Cardiac septum (tissue), 1 donor: ENCODE measurements at regions of chr1 and their contacts with region 1.

Region 1: GRCh38 chr1:17826165-17826488 is 71.0 kb downstream of the ACTL8 start:
- DNase-seq: peak; percentile 80

Region 2: DNA sequence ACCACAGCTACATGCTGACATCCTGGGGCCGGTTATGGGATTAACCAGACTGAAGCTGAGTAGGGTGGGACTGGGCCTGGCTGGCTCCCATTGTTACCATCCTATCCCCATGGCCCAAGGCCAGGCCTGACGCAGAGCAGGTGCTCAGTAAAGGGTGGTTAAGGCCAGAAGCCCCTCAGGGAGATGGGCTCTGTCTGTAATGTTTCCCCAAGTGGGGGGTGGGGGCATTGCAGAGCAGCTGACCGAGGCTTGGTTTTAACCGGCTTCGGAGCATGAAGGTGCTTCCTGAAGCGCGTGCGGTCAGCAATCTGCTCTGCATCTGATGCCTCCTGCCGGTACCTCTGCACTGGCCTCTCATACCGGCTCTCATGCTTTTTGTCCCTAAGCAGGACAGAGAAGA is 154.4 kb before region 1 on chr1:
- intact Hi-C with region 1: loop called (anchors 5 kb)
- DNase-seq: no peak

Region 3: GRCh38 chr1:17892225-17892624 is 66.1 kb after region 1 on chr1:
- intact Hi-C with region 1: loop called (anchors 5 kb)
- DNase-seq: no peak